Activated T-helper 2 cell treated with anti-CD3 and anti-CD28 coated beads, Interferon-gamma antibody, Interleukin-2, Interleukin-4, amounts not matched to agents 10 μg/mL and 5 μg/mL and 100 μg/mL, durations not matched to agents 14 hours and 24 hours and 36 hours (primary cell): ENCODE measurements at regions of chr4 and their contacts with region 1.

Region 1: DNA sequence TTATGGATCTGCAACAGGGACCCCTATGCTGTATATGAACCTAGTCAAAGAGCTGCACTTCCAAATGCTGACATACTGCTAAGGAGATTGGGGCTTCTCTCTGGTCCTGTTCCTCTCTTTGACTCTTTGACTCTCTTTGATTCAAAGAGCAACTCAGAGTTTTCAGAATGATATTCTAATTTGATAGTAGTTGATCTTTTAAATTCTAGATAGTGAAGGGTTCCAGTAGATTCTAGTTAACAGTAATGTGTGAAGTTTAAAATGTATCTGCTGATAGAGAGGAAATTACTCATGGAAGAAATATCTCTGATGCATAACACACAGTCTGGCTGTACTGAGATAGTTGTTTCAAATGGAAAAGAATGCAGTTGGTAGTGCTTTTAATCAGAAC is 239.1 kb downstream of the RASL11B start:
- DNase-seq: no peak
- H3K4me3 Mint-ChIP-seq: no peak overlapping the region
- H3K27ac Mint-ChIP-seq: peak overlapping the region; percentile 82
- H3K4me1 Mint-ChIP-seq: peaks cover 13% of the 10 kb centered on the region
- H3K27me3 Mint-ChIP-seq: no peaks in the 10 kb centered on the region

Region 2: DNA sequence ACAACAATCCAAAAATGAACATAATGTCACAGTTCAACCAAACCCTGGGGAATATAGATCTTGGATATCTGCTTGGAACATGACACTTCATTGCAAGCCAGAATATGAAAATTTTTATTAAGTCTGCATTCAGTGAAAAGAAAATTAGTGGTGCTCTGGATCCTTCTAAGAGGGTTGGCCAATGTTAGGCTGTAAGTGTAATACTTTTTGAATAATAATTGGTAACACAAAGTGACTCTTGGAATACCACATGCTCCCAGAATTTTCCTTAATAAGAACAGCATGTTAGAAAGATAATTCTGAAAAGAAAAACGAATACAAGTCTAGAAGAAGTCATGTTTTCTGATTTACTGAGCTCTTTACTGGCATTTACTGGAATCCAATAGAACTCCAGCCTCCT is 63.3 kb before region 1 on chr4:
- intact Hi-C with region 1: loop called (anchors 1 kb)
- DNase-seq: no peak
- H3K4me3 Mint-ChIP-seq: no peak overlapping the region
- H3K27ac Mint-ChIP-seq: no peak overlapping the region
- H3K4me1 Mint-ChIP-seq: peaks cover 13% of the 10 kb centered on the region
- H3K27me3 Mint-ChIP-seq: no peaks in the 10 kb centered on the region

Region 3: GRCh38 chr4:53113431-53114225 is 12.4 kb after region 1 on chr4:
- intact Hi-C with region 1: loop called (anchors 1 kb)
- DNase-seq: no peak
- H3K4me3 Mint-ChIP-seq: no peak overlapping the region
- H3K27ac Mint-ChIP-seq: peak overlapping the region; percentile 83
- H3K4me1 Mint-ChIP-seq: peaks cover 23% of the 10 kb centered on the region
- H3K27me3 Mint-ChIP-seq: no peaks in the 10 kb centered on the region